GM12878 (cell line): ENCODE measurements at regions of chr5 and their contacts with region 1.

Region 1: DNA sequence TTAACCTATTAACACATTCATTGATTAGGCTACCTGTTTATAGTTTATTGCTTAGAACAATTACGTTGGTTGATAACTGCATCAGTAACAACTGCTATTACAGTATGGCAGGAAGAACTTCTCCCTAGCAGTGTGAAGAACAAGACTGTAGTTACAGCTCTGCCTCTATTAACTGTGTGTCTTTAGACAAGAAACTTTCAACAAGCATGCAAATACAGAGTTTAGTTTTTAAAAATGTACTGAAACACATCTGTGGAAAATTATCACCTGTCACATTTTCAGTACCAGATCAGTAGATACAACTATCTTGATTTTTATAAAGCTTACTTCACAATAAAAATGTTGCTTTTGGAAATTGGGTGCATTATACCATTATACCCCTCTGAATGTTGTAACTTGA is 22.2 kb downstream of the ELL2 start:
- DNase-seq: no peak
- ATAC-seq: peak; percentile 53
- H3K4me3 ChIP-seq: 0 out of 2 replicates have a peak overlapping the region, but pooled peaks have one; percentile 0
- H3K27ac ChIP-seq: peak overlapping the region; percentile 62
- H3K4me1 ChIP-seq: peaks cover 26% of the 10 kb centered on the region
- H3K27me3 ChIP-seq: no peaks in the 10 kb centered on the region
- CTCF ChIP-seq: no peak
- EP300 ChIP-seq: no peak
- POLR2A ChIP-seq: no peak
- RAD21 ChIP-seq: no peak

Region 2: GRCh38 chr5:95949810-95950209 is 10.3 kb after region 1 on chr5:
- CTCF ChIA-PET with region 1: interaction called, 33 read pairs
- POLR2A ChIA-PET with region 1: interaction called, 13 read pairs
- RAD21 ChIA-PET with region 1: interaction called, 17 read pairs
- SMC1A ChIA-PET with region 1: interaction called, 52 read pairs
- in situ Hi-C with region 1: no loop called
- intact Hi-C with region 1: no loop called
- DNase-seq: no peak
- ATAC-seq: peak; percentile 68
- H3K4me3 ChIP-seq: peak overlapping the region; percentile 15; the same call in 1 of the 2 replicates
- H3K27ac ChIP-seq: peak overlapping the region; percentile 67
- H3K4me1 ChIP-seq: peaks cover 18% of the 10 kb centered on the region; the same call in 1 of the 2 replicates
- H3K27me3 ChIP-seq: no peaks in the 10 kb centered on the region
- CTCF ChIP-seq: no peak
- EP300 ChIP-seq: no peak
- POLR2A ChIP-seq: no peak
- RAD21 ChIP-seq: no peak

Region 3: GRCh38 chr5:96896806-96897205 is 957.3 kb after region 1 on chr5:
- CTCF ChIA-PET with region 1: no interaction called
- POLR2A ChIA-PET with region 1: no interaction called
- RAD21 ChIA-PET with region 1: no interaction called
- SMC1A ChIA-PET with region 1: no interaction called
- in situ Hi-C with region 1: no loop called
- intact Hi-C with region 1: no loop called
- DNase-seq: no peak
- ATAC-seq: peak; percentile 98
- H3K4me3 ChIP-seq: 0 out of 2 replicates have a peak overlapping the region, but pooled peaks have one; percentile 15
- H3K27ac ChIP-seq: peak overlapping the region; percentile 68
- H3K4me1 ChIP-seq: peaks cover 10% of the 10 kb centered on the region; the same call in 1 of the 2 replicates
- H3K27me3 ChIP-seq: no peaks in the 10 kb centered on the region
- CTCF ChIP-seq: peak in 1 of 3 experiments; percentile 33; a peak in 2 of 6 replicates
- EP300 ChIP-seq: peak; percentile 56 to 64; a peak in 2 of 4 replicates
- POLR2A ChIP-seq: no peak
- RAD21 ChIP-seq: peak; percentile 31; the same call in 1 of the 2 replicates